Calu3 (cell line): ENCODE measurements at regions of chr2 and their contacts with region 1.

Region 1: GRCh38 chr2:218406209-218406948 is 6.7 kb downstream of the CTDSP1 start:
- DNase-seq: peak; percentile 97
- H3K4me3 Mint-ChIP-seq: peak overlapping the region; percentile 70
- H3K27ac Mint-ChIP-seq: peak overlapping the region; percentile 96
- H3K4me1 Mint-ChIP-seq: peaks cover 31% of the 10 kb centered on the region
- H3K27me3 Mint-ChIP-seq: no peaks in the 10 kb centered on the region
- CTCF ChIP-seq: peak; percentile 80

Region 2: GRCh38 chr2:218466016-218466521 is 59.7 kb after region 1 on chr2:
- CTCF ChIA-PET with region 1: interaction called, 5 read pairs
- intact Hi-C with region 1: loop called (anchors 2 kb)
- DNase-seq: no peak
- H3K4me3 Mint-ChIP-seq: no peak overlapping the region
- H3K27ac Mint-ChIP-seq: no peak overlapping the region
- H3K4me1 Mint-ChIP-seq: no peaks in the 10 kb centered on the region
- H3K27me3 Mint-ChIP-seq: no peaks in the 10 kb centered on the region
- CTCF ChIP-seq: peak; percentile 56

Region 3: DNA sequence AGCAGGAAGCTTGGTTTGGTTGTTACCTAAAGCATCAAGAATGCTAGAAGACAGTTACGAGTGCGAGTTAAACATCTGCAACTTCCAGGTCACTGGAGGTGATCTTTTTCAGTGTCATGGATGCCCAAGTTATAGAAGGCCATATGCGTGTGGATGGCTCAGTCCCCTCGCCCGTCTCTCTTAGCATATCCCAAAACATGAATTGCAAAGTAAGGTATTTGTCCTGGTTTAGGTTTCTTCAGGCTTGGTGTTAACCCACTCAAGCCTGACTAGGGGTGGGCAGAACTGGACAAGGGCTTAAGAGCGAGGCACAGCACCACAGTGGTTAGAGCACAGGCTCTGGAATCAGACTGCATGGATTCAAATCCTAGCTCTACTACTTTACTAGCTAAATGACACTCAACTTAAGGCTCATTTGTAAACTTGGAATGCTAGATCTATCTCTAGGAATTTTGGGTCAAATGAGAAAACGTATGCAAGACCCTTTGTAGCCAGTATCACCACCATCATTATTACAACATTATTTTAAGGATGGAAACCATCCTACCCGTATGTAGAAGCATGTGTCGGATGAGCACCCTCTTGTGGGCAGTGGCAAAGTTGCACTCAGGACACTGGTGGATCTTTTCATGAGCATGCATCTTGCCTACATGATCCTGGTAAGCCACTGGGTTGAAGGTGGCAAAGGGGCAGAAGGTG is 241.9 kb after region 1 on chr2:
- CTCF ChIA-PET with region 1: no interaction called
- intact Hi-C with region 1: loop called (anchors 2 kb)
- DNase-seq: peak; percentile 57
- H3K4me3 Mint-ChIP-seq: no peak overlapping the region
- H3K27ac Mint-ChIP-seq: no peak overlapping the region
- H3K4me1 Mint-ChIP-seq: no peaks in the 10 kb centered on the region
- H3K27me3 Mint-ChIP-seq: no peaks in the 10 kb centered on the region
- CTCF ChIP-seq: peak; percentile 69